CD4-positive, alpha-beta T cell (primary cell): ENCODE measurements at regions of chr10 and their contacts with region 1.

Region 1: DNA sequence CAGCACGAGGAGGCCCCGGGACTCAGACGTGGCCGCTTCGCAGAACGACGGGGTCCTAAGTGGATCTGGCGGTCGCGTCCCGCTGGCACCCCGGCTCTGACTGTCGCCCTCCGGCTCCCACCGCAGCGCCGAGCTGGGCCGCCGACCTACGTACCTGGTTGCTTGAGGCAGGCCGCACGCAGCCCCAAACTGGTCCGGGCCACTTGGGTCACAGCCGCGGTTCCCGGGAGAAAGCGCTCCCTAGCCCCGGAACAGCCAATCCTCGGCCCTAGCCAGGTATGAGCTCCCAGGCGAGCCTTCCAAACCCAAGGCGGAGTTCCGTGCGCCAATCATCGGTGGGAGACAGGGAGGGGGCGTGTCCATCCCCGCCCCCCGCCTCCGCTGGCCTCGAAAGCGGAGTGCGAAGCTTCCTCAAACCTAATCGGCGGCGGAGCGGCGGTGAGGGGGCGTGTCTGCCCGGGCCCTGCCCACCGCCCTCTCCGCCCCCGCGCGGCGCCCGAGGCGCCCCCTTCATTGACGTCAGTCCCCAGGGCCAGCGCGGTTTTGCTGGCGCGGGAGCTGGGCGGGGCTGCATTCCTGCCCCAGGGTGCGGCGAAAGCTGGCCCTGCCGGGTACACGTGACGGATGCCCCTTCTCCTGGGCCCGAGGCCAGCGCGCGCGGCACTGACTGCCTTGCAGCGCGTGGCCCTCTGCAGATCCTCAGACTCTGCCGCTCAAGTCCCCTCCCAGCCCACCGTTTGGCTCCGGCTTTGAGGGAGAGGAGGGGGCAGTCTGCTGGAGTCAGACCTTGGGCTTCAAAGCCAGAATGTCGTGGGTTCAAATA is at the start of gene AVPI1:
- DNase-seq: peak; percentile 90 to 98 (median 94)
- ATAC-seq: peak; percentile 91
- H3K4me3 ChIP-seq: peak within 1 kb of the TSS; percentile 82
- H3K4me3 Mint-ChIP-seq: peak within 1 kb of the TSS; percentile 90
- H3K27ac ChIP-seq: peak within 1 kb of the TSS; percentile 52 to 62
- H3K27ac Mint-ChIP-seq: peak within 1 kb of the TSS; percentile 75
- H3K4me1 ChIP-seq: peaks cover 35% of the 10 kb centered on the region
- H3K4me1 Mint-ChIP-seq: peaks cover 16% of the 10 kb centered on the region
- H3K27me3 ChIP-seq: no peaks in the 10 kb centered on the region
- H3K27me3 Mint-ChIP-seq: no peaks in the 10 kb centered on the region
- CTCF ChIP-seq: no peak
- total RNA-seq, gene AVPI1: 10.7 to 11.6 TPM

Region 2: GRCh38 chr10:97640174-97640867 is 46.9 kb before region 1 on chr10 and contains the start of gene PI4K2A:
- CTCF ChIA-PET with region 1: no interaction called
- POLR2A ChIA-PET with region 1: interaction called, 12 read pairs
- intact Hi-C with region 1: loop called in 1 of 2 experiments (anchors 1 kb)
- DNase-seq: peak; percentile 96 to 100 (median 98)
- ATAC-seq: peak; percentile 97
- H3K4me3 ChIP-seq: peak within 1 kb of the TSS; percentile 65
- H3K4me3 Mint-ChIP-seq: peak within 1 kb of the TSS; percentile 98
- H3K27ac ChIP-seq: no peak within 1 kb of the TSS
- H3K27ac Mint-ChIP-seq: peak within 1 kb of the TSS; percentile 88
- H3K4me1 ChIP-seq: peaks cover 15% of the 10 kb centered on the region
- H3K4me1 Mint-ChIP-seq: peaks cover 26% of the 10 kb centered on the region
- H3K27me3 ChIP-seq: no peaks in the 10 kb centered on the region
- H3K27me3 Mint-ChIP-seq: no peaks in the 10 kb centered on the region
- CTCF ChIP-seq: no peak
- total RNA-seq, gene PI4K2A: 26.3 to 27.2 TPM

Region 3: DNA sequence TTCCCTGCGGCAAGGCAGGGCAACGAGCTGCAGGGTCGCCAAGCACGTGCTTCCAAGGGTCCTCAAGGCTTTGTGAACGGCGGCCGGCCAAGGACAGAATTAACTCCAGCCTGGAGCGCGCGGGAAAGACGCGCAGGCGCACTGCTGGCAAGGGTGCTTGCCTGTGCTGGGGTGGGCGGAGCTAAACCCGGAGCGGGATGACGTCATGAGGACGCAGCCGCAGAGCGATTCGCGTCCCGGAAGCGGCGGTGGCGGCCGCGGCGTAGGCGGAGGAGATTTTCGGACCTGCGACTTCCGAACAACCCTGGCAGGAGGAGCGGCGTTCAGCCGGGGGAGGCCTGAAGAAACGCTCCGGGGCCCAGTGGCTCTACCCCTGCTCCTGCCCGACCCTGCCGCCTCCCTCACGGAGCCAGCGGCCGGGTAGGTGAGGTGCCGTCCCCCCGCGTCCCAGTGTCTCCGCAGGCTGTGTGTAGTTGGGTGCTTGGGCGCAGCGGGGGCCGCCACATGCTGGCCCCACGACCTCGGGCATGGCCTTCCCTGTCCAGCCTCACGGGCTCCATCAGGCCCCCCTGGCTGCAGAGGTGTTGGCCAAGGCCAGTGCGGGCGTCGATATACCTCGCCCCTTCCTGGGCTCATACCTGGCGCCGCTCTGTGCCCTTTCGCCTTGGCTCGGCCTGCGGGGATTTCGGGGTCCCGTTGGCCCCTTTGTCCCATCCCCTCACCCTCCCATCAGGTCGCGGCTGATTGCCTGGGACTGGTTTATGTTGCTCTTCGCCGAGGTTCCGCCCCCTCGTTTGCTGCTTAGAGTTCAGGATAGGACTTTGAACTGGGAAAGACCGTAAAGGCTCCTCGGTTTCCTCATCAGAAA is 50.0 kb after region 1 on chr10 and contains the start of gene ZFYVE27:
- CTCF ChIA-PET with region 1: interaction called, 14 read pairs
- POLR2A ChIA-PET with region 1: interaction called, 65 read pairs
- intact Hi-C with region 1: no loop called
- DNase-seq: peak; percentile 91 to 98 (median 94)
- ATAC-seq: peak; percentile 90
- H3K4me3 ChIP-seq: peak within 1 kb of the TSS; percentile 80
- H3K4me3 Mint-ChIP-seq: peak within 1 kb of the TSS; percentile 97
- H3K27ac ChIP-seq: peak within 1 kb of the TSS; percentile 85 to 92
- H3K27ac Mint-ChIP-seq: peak within 1 kb of the TSS; percentile 92
- H3K4me1 ChIP-seq: peaks cover 37% of the 10 kb centered on the region
- H3K4me1 Mint-ChIP-seq: peaks cover 57% of the 10 kb centered on the region
- H3K27me3 ChIP-seq: no peaks in the 10 kb centered on the region
- H3K27me3 Mint-ChIP-seq: no peaks in the 10 kb centered on the region
- CTCF ChIP-seq: no peak
- total RNA-seq, gene ZFYVE27: 58.4 to 60.6 TPM